CD8-positive, alpha-beta T cell (primary cell): ENCODE measurements at regions of chr17 and their contacts with region 1.

Region 1: DNA sequence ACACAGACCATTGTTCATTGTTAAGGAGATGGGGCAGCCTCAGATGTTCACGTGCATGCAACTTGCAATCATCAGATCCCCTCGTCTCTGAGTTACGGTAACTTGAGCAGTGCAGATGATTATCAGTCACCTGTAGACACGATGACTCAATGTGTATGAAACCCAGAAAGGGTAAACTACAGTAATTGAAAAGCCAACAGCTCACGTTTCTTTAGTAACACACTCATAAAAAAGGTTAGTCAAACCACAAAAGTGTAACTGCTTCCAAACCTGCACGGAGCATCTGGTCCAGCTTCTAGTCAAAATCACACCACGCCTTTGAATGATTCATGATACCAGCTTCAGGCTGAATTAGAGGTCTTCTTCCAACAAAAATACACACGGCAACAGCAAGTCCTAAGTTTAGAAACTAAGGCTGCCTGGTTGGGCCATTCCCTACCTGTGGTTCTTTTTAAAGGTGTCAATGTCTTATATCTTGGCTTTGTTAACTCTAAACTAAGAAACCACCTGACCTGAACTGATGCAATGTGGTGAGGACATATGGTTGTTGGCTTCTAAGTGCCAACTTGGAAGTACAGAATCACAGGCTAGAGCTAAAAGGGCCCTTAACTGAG is 32.3 kb downstream of the GRB7 start:
- DNase-seq: peak in 8 of 9 experiments; percentile 38 to 90 (median 66)
- ATAC-seq: peak; percentile 78
- H3K4me3 ChIP-seq: peak overlapping the region in 1 of 2 experiments; percentile 1
- H3K4me3 Mint-ChIP-seq: peak overlapping the region; percentile 66
- H3K27ac ChIP-seq: peak overlapping the region; percentile 46 to 82
- H3K27ac Mint-ChIP-seq: peak overlapping the region; percentile 97
- H3K4me1 ChIP-seq: peaks cover 99% of the 10 kb centered on the region
- H3K4me1 Mint-ChIP-seq: peaks cover 96% of the 10 kb centered on the region
- H3K27me3 ChIP-seq: no peaks in the 10 kb centered on the region
- H3K27me3 Mint-ChIP-seq: no peaks in the 10 kb centered on the region
- CTCF ChIP-seq: no peak

Region 2: DNA sequence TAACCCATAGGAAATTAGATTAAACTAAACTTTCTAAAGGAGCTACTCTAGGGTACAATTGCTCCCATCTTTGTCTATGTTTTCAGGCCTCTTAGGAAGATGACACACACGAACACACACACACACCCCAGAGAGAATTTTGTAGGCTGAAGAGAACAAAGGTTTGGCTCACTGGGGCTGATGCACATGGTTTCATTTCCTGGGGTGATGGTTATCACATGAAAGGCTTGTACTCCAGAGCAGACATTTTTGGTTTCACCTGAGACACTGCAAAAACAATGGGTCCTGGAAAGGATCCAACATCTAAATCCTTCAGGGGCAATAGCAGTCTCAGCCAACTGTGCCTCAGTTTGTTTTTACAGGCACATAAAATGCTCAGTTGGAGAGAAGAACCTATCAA is 30.5 kb after region 1 on chr17:
- CTCF ChIA-PET with region 1: interaction called, 5 read pairs
- POLR2A ChIA-PET with region 1: no interaction called
- intact Hi-C with region 1: loop called in 1 of 2 experiments (anchors 1 kb)
- DNase-seq: peak; percentile 16 to 87 (median 61)
- ATAC-seq: peak; percentile 95
- H3K4me3 ChIP-seq: no peak overlapping the region
- H3K4me3 Mint-ChIP-seq: peak overlapping the region; percentile 26
- H3K27ac ChIP-seq: peak overlapping the region; percentile 19 to 49
- H3K27ac Mint-ChIP-seq: peak overlapping the region; percentile 94
- H3K4me1 ChIP-seq: peaks cover 59% of the 10 kb centered on the region
- H3K4me1 Mint-ChIP-seq: peaks cover 64% of the 10 kb centered on the region
- H3K27me3 ChIP-seq: no peaks in the 10 kb centered on the region
- H3K27me3 Mint-ChIP-seq: no peaks in the 10 kb centered on the region
- CTCF ChIP-seq: no peak